Gastrocnemius medialis (tissue), 4 donors: ENCODE measurements at regions of chr1 and their contacts with region 1.

Region 1: DNA sequence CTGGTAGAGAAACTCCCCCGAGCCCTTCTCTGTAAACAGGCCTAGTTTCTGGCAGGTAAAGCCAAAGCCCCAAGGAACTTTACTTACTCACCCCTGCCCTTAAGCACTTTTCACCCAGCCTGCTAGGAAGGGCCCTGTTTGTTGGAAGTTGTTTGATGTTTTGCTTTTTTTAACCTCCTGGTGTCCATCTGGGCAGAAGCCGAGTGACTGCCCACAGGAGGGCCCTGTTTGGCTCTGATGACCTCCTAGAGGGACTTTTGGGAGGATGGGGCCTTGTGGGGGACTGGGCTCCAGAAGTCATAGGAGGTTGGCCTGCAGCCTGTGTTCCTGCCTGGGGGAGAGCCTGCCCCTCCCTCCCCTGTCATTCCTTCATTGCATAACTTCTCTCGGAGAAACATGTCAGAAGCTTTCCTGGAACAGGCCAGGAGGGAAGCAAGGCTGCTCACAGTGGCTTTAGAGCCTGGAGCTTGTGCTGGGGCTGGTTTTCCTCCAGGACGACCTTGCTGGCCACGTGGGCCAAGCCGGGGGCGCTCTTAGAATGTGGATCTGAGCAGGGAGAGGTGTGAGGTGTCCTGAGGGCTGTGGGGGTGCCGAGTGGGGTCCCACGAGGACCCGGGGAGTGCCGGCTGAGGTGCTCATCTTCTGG is 33.9 kb downstream of the COQ8A start:
- DNase-seq: peak; percentile 74 to 85
- ATAC-seq: peak; percentile 65 to 68
- H3K4me3 ChIP-seq: peak overlapping the region; percentile 29 to 45 (median 40)
- H3K27ac ChIP-seq: peak overlapping the region; percentile 99
- H3K4me1 ChIP-seq: peaks cover 82 to 84% of the 10 kb centered on the region in 2 donors
- H3K27me3 ChIP-seq: no peaks in the 10 kb centered on the region
- CTCF ChIP-seq: no peak
- POLR2A ChIP-seq: peak; percentile 20 to 33

Region 2: GRCh38 chr1:226308723-226309315 is 665.2 kb before region 1 on chr1 and contains the start of gene LIN9:
- in situ Hi-C with region 1: no loop called
- intact Hi-C with region 1: no loop called
- DNase-seq: peak; percentile 69 to 75
- ATAC-seq: peak; percentile 96 to 99
- H3K4me3 ChIP-seq: peak within 1 kb of the TSS; percentile 86 to 98 (median 96)
- H3K27ac ChIP-seq: peak within 1 kb of the TSS; percentile 76 to 85 (median 82)
- H3K4me1 ChIP-seq: peaks cover 7 to 9% of the 10 kb centered on the region in 2 donors
- H3K27me3 ChIP-seq: no peaks in the 10 kb centered on the region
- CTCF ChIP-seq: no peak
- POLR2A ChIP-seq: peak in 1 of 2 donors; percentile 39
- total RNA-seq, gene LIN9: 2.1 to 4.7 (median 2.8) TPM

Region 3: DNA sequence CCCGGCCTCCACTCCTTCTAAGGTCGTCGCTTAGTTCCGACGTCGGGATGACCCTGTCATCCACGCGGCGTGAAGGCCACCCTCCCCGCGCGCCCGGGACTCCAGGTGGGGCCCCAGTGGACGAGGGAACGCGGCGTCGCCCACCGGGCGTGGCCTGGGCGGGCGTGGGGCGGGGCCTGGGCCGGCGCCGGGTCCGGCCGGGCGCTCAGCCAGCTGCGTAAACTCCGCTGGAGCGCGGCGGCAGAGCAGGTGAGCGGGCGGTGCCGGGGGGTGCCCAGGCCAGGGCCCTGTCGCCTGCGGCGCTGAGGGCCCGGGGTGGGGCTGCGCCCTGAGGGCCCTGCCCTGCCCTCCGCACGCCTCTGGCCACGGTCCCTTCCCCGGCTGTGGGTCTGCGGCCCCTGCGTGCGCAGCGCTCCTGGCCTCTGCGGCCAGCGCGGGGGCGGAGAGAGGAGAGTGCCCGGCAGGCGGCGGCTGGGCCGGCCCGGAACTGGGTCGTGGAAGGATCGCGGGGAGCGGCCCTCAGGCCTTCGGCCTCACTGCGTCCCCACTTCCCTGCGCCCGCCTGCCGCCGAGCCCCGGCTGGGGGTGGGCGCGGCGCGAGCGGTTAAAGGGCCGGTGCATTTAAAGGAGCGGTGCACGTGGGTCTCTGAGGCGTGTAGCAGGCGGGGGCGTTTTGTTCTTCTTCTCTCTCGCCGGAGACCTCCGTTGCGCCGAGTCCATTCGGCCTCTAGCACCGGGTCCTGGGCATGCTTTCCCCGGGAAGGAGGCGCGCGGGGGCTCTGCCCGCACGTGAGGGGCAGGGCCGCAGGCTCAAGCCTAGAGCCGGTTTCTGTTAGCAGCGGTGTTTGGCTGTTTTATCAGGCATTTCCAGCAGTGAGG is 103.4 kb before region 1 on chr1 and contains the start of gene PSEN2:
- in situ Hi-C with region 1: no loop called
- intact Hi-C with region 1: loop called (anchors 5 kb)
- DNase-seq: peak; percentile 55 to 77
- ATAC-seq: peak; percentile 71 to 88
- H3K4me3 ChIP-seq: peak within 1 kb of the TSS; percentile 72 to 91 (median 88)
- H3K27ac ChIP-seq: peak within 1 kb of the TSS; percentile 71 to 94 (median 90)
- H3K4me1 ChIP-seq: peaks cover 32 to 36% of the 10 kb centered on the region in 2 donors
- H3K27me3 ChIP-seq: no peaks in the 10 kb centered on the region
- CTCF ChIP-seq: peak in 3 of 5 experiments; percentile 16 to 42 (median 35)
- POLR2A ChIP-seq: peak; percentile 69 to 70
- total RNA-seq, gene PSEN2: 24.8 to 41.4 (median 34.1) TPM

Region 4: DNA sequence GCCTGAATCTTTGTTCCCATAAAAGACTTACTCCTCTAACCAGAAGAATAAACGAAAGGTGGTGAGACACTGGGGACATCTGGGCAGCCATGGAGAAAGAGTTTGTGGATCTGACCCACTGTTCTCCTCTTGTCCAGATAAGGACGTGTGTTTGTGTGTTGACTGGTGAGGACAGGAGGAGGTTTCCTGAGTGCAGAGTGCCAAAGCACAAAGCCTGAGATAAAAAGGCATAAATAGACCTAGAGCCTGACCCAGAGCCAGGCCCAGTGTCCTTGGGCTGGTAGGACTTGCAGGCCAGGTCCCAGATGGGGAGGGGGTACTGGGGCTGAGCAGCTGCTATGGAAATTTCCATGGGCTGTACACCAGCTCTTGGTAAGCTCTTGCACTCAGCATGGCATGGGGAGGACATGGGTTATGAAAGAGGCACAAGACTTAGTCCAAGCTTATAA is 53.6 kb before region 1 on chr1:
- in situ Hi-C with region 1: no loop called
- intact Hi-C with region 1: loop called (anchors 2 kb)
- DNase-seq: peak; percentile 96 to 99
- ATAC-seq: peak; percentile 83 to 87
- H3K4me3 ChIP-seq: no peak overlapping the region
- H3K27ac ChIP-seq: peak overlapping the region; percentile 92 to 97 (median 94)
- H3K4me1 ChIP-seq: peaks cover 18 to 49% of the 10 kb centered on the region in 2 donors
- H3K27me3 ChIP-seq: no peaks in the 10 kb centered on the region
- CTCF ChIP-seq: peak in 1 of 5 experiments; percentile 16
- POLR2A ChIP-seq: peak; percentile 36 to 74